Heart right ventricle (tissue), 16 donors: ENCODE measurements at regions of chr10 and their contacts with region 1.

Region 1: GRCh38 chr10:73366381-73367298 is 8.0 kb upstream of the CFAP70 start:
- DNase-seq: no peak
- ATAC-seq: peak in 1 of 8 donors; percentile 43
- H3K4me3 ChIP-seq: no peak overlapping the region
- H3K27ac ChIP-seq: no peak overlapping the region
- H3K4me1 ChIP-seq: no peaks in the 10 kb centered on the region
- H3K27me3 ChIP-seq: no peaks in the 10 kb centered on the region
- CTCF ChIP-seq: no peak

Region 2: GRCh38 chr10:73096449-73097304 is 270.0 kb before region 1 on chr10 and contains the start of gene P4HA1:
- intact Hi-C with region 1: no loop called
- DNase-seq: peak; percentile 99 to 100
- ATAC-seq: peak; percentile 97 to 98 (median 98)
- H3K4me3 ChIP-seq: peak within 1 kb of the TSS; percentile 76 to 92 (median 85)
- H3K27ac ChIP-seq: peak within 1 kb of the TSS; percentile 94 to 99 (median 96)
- H3K4me1 ChIP-seq: peaks cover 0 to 51% (median 38%) of the 10 kb centered on the region in 9 donors
- H3K27me3 ChIP-seq: no peaks in the 10 kb centered on the region
- CTCF ChIP-seq: peak; percentile 33 to 92 (median 69)
- total RNA-seq, gene P4HA1: 44.4 to 67.3 (median 51.5) TPM

Region 3: GRCh38 chr10:73478636-73479035 is 112.0 kb after region 1 on chr10:
- intact Hi-C with region 1: loop called in 1 of 10 experiments (anchors 10 kb)
- DNase-seq: no peak
- ATAC-seq: no peak
- H3K4me3 ChIP-seq: no peak overlapping the region
- H3K27ac ChIP-seq: no peak overlapping the region
- H3K4me1 ChIP-seq: peaks cover 0 to 7% (median 0%) of the 10 kb centered on the region in 9 donors
- H3K27me3 ChIP-seq: no peaks in the 10 kb centered on the region
- CTCF ChIP-seq: no peak

Region 4: DNA sequence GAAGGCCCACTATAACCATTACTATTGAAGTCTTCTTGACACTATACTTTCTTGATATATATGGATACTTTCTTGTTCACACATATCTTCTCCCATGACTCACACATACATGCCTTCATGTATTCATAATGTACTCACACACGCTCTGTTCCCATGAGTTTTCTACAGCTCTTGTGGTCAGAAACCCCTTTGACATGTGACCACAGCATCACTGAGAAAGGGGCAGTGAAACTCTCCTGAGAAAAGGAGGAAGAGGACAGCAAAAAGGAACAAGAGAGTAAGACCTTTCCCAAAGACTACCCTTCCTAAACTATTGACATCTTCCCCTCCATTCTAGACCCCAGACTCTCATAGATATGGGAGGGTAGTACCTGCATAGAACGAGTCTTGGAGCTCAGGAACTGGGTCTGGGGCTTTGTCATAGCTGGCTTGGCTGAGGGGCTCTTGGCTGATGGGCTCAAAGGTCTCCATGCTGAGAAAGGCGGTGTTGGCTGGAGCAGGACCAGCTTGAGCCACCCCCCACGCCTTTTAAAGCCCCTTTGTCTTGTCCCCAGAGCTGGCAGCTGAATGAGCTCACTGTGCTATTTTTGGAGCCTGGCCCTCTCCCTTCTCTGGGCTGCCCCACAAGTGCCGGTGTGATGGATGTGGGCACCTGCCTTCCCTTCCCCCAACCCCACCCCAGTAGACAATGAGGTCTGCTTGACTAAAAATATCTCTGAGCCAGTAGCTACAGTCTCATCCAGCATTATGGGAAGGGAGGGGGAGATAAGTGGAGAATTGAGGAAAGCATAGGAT is 284.1 kb after region 1 on chr10:
- intact Hi-C with region 1: no loop called
- DNase-seq: peak; percentile 58 to 81
- ATAC-seq: peak; percentile 42 to 75 (median 62)
- H3K4me3 ChIP-seq: peak overlapping the region in 7 of 10 donors; percentile 14 to 87 (median 29)
- H3K27ac ChIP-seq: peak overlapping the region; percentile 64 to 97 (median 88)
- H3K4me1 ChIP-seq: peaks cover 9 to 64% (median 32%) of the 10 kb centered on the region in 9 donors
- H3K27me3 ChIP-seq: no peaks in the 10 kb centered on the region
- CTCF ChIP-seq: no peak